ENCODE measurements at regions of chr10 and their contacts with region 1.

Region 1: GRCh38 chr10:17607603-17608332 is 9.4 kb downstream of the HACD1 start:
- DNase-seq: no peak
- ATAC-seq: peak; percentile 91
- H3K4me3 ChIP-seq: no peak overlapping the region
- H3K27ac ChIP-seq: no peak overlapping the region
- H3K4me1 ChIP-seq: no peaks in the 10 kb centered on the region
- H3K27me3 ChIP-seq: no peaks in the 10 kb centered on the region
- CTCF ChIP-seq: peak; percentile 74 to 88 (median 79)
- EP300 ChIP-seq: no peak
- POLR2A ChIP-seq: no peak
- RAD21 ChIP-seq: peak; percentile 96

Region 2: GRCh38 chr10:17564911-17565310 is 42.9 kb before region 1 on chr10:
- CTCF ChIA-PET with region 1: no interaction called
- POLR2A ChIA-PET with region 1: no interaction called
- RAD21 ChIA-PET with region 1: no interaction called
- SMC1A ChIA-PET with region 1: no interaction called
- in situ Hi-C with region 1: no loop called
- intact Hi-C with region 1: no loop called
- DNase-seq: no peak
- ATAC-seq: no peak
- H3K4me3 ChIP-seq: no peak overlapping the region
- H3K27ac ChIP-seq: no peak overlapping the region
- H3K4me1 ChIP-seq: no peaks in the 10 kb centered on the region
- H3K27me3 ChIP-seq: no peaks in the 10 kb centered on the region
- CTCF ChIP-seq: no peak
- EP300 ChIP-seq: no peak
- POLR2A ChIP-seq: no peak
- RAD21 ChIP-seq: no peak

Region 3: GRCh38 chr10:17742918-17743317 is 135.2 kb after region 1 on chr10:
- CTCF ChIA-PET with region 1: interaction called, 61 read pairs
- POLR2A ChIA-PET with region 1: no interaction called
- RAD21 ChIA-PET with region 1: interaction called, 4 read pairs
- SMC1A ChIA-PET with region 1: interaction called, 4 read pairs
- in situ Hi-C with region 1: loop called (anchors 5 kb)
- intact Hi-C with region 1: loop called (anchors 1 kb)
- DNase-seq: no peak
- ATAC-seq: peak; percentile 58
- H3K4me3 ChIP-seq: no peak overlapping the region
- H3K27ac ChIP-seq: no peak overlapping the region
- H3K4me1 ChIP-seq: no peaks in the 10 kb centered on the region
- H3K27me3 ChIP-seq: no peaks in the 10 kb centered on the region; a peak in 1 of 4 replicates
- CTCF ChIP-seq: peak; percentile 70 to 83 (median 77)
- EP300 ChIP-seq: no peak
- POLR2A ChIP-seq: no peak
- RAD21 ChIP-seq: peak; percentile 70

Region 4: DNA sequence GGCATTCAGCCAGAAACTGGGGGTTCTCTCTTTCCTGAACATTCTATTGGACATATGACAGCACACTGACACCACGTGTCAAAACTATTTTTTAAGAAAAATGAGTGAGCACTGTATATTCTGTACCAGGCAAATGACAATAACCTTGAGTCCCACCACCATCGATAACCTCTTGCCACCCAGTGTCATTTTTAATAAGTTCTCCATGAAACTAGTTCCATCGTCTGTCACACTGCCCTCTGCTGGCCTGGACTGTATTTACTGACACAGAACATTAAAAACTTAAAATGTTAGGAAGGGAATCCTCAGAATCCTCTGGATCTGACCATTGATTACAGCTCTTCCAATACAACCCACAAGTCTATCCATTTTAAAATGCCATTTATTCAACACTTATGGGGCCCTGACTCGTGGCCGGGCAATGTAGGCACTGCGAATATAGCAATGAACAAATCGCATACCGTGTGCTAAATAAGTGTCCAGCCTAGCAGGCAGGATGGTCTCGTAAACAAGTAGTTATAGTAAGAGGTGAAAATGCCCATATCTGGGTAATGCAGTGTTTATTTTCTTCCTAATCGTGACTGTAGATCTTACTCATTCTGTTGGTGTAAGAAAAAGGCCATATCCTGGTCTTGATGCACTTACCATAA is 496.6 kb after region 1 on chr10:
- CTCF ChIA-PET with region 1: interaction called, 3 read pairs
- POLR2A ChIA-PET with region 1: no interaction called
- RAD21 ChIA-PET with region 1: no interaction called
- SMC1A ChIA-PET with region 1: no interaction called
- in situ Hi-C with region 1: loop called (anchors 10 kb)
- intact Hi-C with region 1: loop called (anchors 1 kb)
- DNase-seq: no peak
- ATAC-seq: peak; percentile 60
- H3K4me3 ChIP-seq: no peak overlapping the region
- H3K27ac ChIP-seq: no peak overlapping the region
- H3K4me1 ChIP-seq: no peaks in the 10 kb centered on the region
- H3K27me3 ChIP-seq: no peaks in the 10 kb centered on the region
- CTCF ChIP-seq: peak; percentile 52 to 71 (median 55)
- EP300 ChIP-seq: no peak
- POLR2A ChIP-seq: no peak
- RAD21 ChIP-seq: peak; percentile 60

Region 5: DNA sequence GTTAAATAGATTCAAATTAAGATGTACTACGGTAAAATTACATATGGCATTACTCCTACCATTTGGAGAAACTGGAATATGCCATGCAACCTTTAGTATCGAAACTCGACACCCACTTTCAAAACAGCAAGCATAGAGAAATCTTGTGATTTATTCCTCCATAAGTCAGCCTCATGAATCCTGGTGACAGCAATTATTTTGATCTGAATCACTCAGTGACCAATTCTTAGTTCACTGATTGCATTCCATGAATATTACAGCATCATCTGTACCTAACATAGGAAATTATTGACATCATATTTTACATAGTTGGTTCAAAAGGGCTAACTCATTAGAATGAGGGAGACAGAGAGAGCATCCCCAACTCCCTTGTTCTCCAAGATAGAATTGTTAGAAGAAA is 622.1 kb after region 1 on chr10:
- CTCF ChIA-PET with region 1: no interaction called
- POLR2A ChIA-PET with region 1: no interaction called
- RAD21 ChIA-PET with region 1: no interaction called
- SMC1A ChIA-PET with region 1: no interaction called
- in situ Hi-C with region 1: loop called (anchors 10 kb)
- intact Hi-C with region 1: loop called (anchors 5 kb)
- DNase-seq: no peak
- ATAC-seq: no peak
- H3K4me3 ChIP-seq: no peak overlapping the region
- H3K27ac ChIP-seq: no peak overlapping the region
- H3K4me1 ChIP-seq: no peaks in the 10 kb centered on the region
- H3K27me3 ChIP-seq: no peaks in the 10 kb centered on the region
- CTCF ChIP-seq: no peak
- EP300 ChIP-seq: no peak
- POLR2A ChIP-seq: no peak
- RAD21 ChIP-seq: no peak

Region 6: DNA sequence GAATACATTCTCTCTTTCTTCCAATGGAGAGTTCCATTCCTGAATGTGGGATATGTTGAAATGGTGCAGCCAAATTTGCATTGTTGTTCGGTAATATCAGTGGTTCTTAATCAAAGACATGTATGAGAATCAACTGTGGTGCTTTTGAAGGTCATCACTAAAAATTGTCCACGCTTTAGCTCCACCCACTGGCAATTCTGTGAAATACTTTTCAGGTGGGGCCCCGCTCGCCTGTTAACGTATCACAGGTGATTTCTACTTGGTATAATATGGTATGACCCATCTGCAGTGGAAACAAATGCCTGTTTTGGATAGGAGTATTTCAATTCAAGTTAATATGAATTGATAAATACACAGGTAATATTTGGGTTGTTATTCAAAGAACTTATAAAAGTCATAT is 865.2 kb after region 1 on chr10:
- CTCF ChIA-PET with region 1: no interaction called
- POLR2A ChIA-PET with region 1: no interaction called
- RAD21 ChIA-PET with region 1: no interaction called
- SMC1A ChIA-PET with region 1: no interaction called
- in situ Hi-C with region 1: no loop called
- intact Hi-C with region 1: no loop called
- DNase-seq: no peak
- ATAC-seq: peak; percentile 70
- H3K4me3 ChIP-seq: no peak overlapping the region
- H3K27ac ChIP-seq: no peak overlapping the region
- H3K4me1 ChIP-seq: no peaks in the 10 kb centered on the region
- H3K27me3 ChIP-seq: no peaks in the 10 kb centered on the region
- CTCF ChIP-seq: peak; percentile 21 to 43 (median 32); a peak in 4 of 6 replicates
- EP300 ChIP-seq: no peak
- POLR2A ChIP-seq: no peak
- RAD21 ChIP-seq: no peak